Activated CD4-positive, alpha-beta T cell treated with anti-CD3 and anti-CD28 coated beads for 36 hours (primary cell): ENCODE measurements at regions of chr6 and their contacts with region 1.

Region 1: DNA sequence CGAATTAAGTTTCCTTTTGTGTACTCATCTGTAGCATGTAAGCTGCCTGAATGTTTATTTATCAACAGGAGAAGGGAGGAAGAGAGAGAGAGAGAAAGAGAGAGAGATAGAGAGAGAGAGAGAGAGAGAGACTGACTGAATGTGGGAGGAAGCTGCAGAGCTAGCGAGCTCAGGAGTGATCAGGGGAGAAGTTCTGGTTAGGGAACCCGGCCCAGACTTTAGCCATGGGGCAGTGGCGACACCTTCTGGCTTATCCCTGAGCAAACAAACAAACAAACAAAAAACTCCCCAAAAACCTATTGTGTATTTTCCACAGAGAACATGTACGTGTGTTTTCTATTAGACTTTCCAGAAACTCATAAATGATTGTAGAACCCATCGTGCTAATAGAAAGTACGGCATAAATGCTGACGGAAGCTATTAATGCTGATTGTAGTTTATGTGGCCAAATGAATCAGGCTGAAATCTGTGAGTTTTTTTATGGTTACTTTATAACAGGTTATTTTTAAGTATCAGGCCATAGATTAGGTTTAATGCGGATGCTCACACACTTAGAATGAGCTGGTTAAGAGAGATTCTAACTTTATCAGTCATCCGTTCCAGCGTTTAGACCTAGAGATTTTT is 92.8 kb downstream of the CLIC5 start:
- DNase-seq: peak; percentile 83
- ATAC-seq: peak; percentile 22
- H3K4me3 Mint-ChIP-seq: peak overlapping the region; percentile 15
- H3K27ac Mint-ChIP-seq: peak overlapping the region; percentile 90
- H3K4me1 Mint-ChIP-seq: peaks cover 53% of the 10 kb centered on the region
- H3K27me3 Mint-ChIP-seq: no peaks in the 10 kb centered on the region

Region 2: GRCh38 chr6:44475779-44476434 is 1446.9 kb before region 1 on chr6:
- CTCF ChIA-PET with region 1: interaction called, 9 read pairs
- POLR2A ChIA-PET with region 1: no interaction called
- intact Hi-C with region 1: loop called (anchors 2 kb)
- DNase-seq: peak; percentile 86
- ATAC-seq: peak; percentile 94
- H3K4me3 Mint-ChIP-seq: no peak overlapping the region
- H3K27ac Mint-ChIP-seq: no peak overlapping the region
- H3K4me1 Mint-ChIP-seq: no peaks in the 10 kb centered on the region
- H3K27me3 Mint-ChIP-seq: no peaks in the 10 kb centered on the region

Region 3: GRCh38 chr6:44932651-44933091 is 990.2 kb before region 1 on chr6:
- CTCF ChIA-PET with region 1: no interaction called
- POLR2A ChIA-PET with region 1: no interaction called
- intact Hi-C with region 1: loop called in 1 of 2 experiments (anchors 10 kb)
- DNase-seq: peak; percentile 55
- ATAC-seq: peak; percentile 42
- H3K4me3 Mint-ChIP-seq: peak overlapping the region; percentile 67
- H3K27ac Mint-ChIP-seq: peak overlapping the region; percentile 81
- H3K4me1 Mint-ChIP-seq: peaks cover 52% of the 10 kb centered on the region
- H3K27me3 Mint-ChIP-seq: no peaks in the 10 kb centered on the region

Region 4: GRCh38 chr6:45421709-45422502 is 500.9 kb before region 1 on chr6:
- CTCF ChIA-PET with region 1: interaction called, 3 read pairs
- POLR2A ChIA-PET with region 1: no interaction called
- intact Hi-C with region 1: loop called (anchors 1 kb)
- DNase-seq: peak; percentile 75
- ATAC-seq: peak; percentile 23
- H3K4me3 Mint-ChIP-seq: peak overlapping the region; percentile 90
- H3K27ac Mint-ChIP-seq: peak overlapping the region; percentile 94
- H3K4me1 Mint-ChIP-seq: peaks cover 36% of the 10 kb centered on the region
- H3K27me3 Mint-ChIP-seq: peaks cover 11% of the 10 kb centered on the region

Region 5: GRCh38 chr6:45590225-45590624 is 332.6 kb before region 1 on chr6:
- CTCF ChIA-PET with region 1: interaction called, 3 read pairs
- POLR2A ChIA-PET with region 1: no interaction called
- intact Hi-C with region 1: loop called in 1 of 2 experiments (anchors 5 kb)
- DNase-seq: no peak
- ATAC-seq: peak; percentile 40
- H3K4me3 Mint-ChIP-seq: no peak overlapping the region
- H3K27ac Mint-ChIP-seq: peak overlapping the region; percentile 80
- H3K4me1 Mint-ChIP-seq: peaks cover 81% of the 10 kb centered on the region
- H3K27me3 Mint-ChIP-seq: no peaks in the 10 kb centered on the region

Region 6: GRCh38 chr6:45816674-45817297 is 106.1 kb before region 1 on chr6:
- CTCF ChIA-PET with region 1: interaction called, 4 read pairs
- POLR2A ChIA-PET with region 1: interaction called, 3 read pairs
- intact Hi-C with region 1: loop called in 1 of 2 experiments (anchors 1 kb)
- DNase-seq: no peak
- ATAC-seq: no peak
- H3K4me3 Mint-ChIP-seq: no peak overlapping the region
- H3K27ac Mint-ChIP-seq: peak overlapping the region; percentile 61
- H3K4me1 Mint-ChIP-seq: peaks cover 29% of the 10 kb centered on the region
- H3K27me3 Mint-ChIP-seq: peaks cover 4% of the 10 kb centered on the region